CD8-positive, alpha-beta memory T cell (primary cell): ENCODE measurements at regions of chrX and their contacts with region 1.

Region 1: GRCh38 chrX:45801554-45801953 is 600.9 kb upstream of the DIPK2B start:
- DNase-seq: peak in 2 of 5 donors; percentile 20 to 28
- H3K4me3 ChIP-seq: no peak overlapping the region
- H3K4me3 Mint-ChIP-seq: peak overlapping the region in 6 of 7 donors; percentile 50 to 71 (median 63)
- H3K27ac ChIP-seq: peak overlapping the region; percentile 24
- H3K27ac Mint-ChIP-seq: peak overlapping the region in 5 of 8 donors; percentile 50 to 83 (median 72)
- H3K4me1 ChIP-seq: peaks cover 4% of the 10 kb centered on the region
- H3K4me1 Mint-ChIP-seq: peaks cover 16 to 79% (median 69%) of the 10 kb centered on the region in 3 donors
- H3K27me3 ChIP-seq: no peaks in the 10 kb centered on the region
- H3K27me3 Mint-ChIP-seq: peaks cover 0 to 5% of the 10 kb centered on the region in 2 donors

Region 2: DNA sequence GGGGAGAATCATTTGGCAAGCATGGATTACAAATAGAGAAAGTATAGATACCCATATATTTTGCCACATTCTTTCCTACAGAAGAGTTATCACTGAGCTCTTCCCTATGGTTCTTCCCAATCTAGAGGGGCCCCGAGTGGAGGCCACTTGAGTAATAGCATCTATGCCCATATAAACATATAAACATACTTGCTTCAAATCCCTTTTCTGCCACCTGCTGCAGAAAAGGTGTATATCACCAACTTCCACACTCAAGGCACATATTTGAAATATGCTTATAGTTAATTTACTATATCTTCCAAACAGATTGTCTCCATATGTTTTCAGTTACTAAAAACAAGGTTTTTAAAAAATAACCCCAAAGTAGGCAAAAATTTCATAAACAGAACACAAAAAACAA is 42.0 kb after region 1 on chrX:
- CTCF ChIA-PET with region 1: interaction called, 28 read pairs
- POLR2A ChIA-PET with region 1: no interaction called
- DNase-seq: peak in 1 of 5 donors; percentile 13
- H3K4me3 ChIP-seq: no peak overlapping the region
- H3K4me3 Mint-ChIP-seq: peak overlapping the region in 1 of 7 donors; percentile 27
- H3K27ac ChIP-seq: no peak overlapping the region
- H3K27ac Mint-ChIP-seq: peak overlapping the region in 1 of 8 donors; percentile 2
- H3K4me1 ChIP-seq: no peaks in the 10 kb centered on the region
- H3K4me1 Mint-ChIP-seq: peaks cover 5 to 38% (median 25%) of the 10 kb centered on the region in 3 donors
- H3K27me3 ChIP-seq: no peaks in the 10 kb centered on the region
- H3K27me3 Mint-ChIP-seq: peaks cover 0 to 7% of the 10 kb centered on the region in 2 donors

Region 3: GRCh38 chrX:45849253-45849862 is 47.8 kb after region 1 on chrX:
- CTCF ChIA-PET with region 1: interaction called, 28 read pairs
- POLR2A ChIA-PET with region 1: interaction called, 4 read pairs
- DNase-seq: peak in 3 of 5 donors; percentile 16 to 45 (median 19)
- H3K4me3 ChIP-seq: peak overlapping the region; percentile 65
- H3K4me3 Mint-ChIP-seq: peak overlapping the region; percentile 93 to 96 (median 95)
- H3K27ac ChIP-seq: no peak overlapping the region
- H3K27ac Mint-ChIP-seq: peak overlapping the region in 5 of 8 donors; percentile 2 to 92 (median 63)
- H3K4me1 ChIP-seq: no peaks in the 10 kb centered on the region
- H3K4me1 Mint-ChIP-seq: peaks cover 18 to 21% (median 18%) of the 10 kb centered on the region in 3 donors
- H3K27me3 ChIP-seq: no peaks in the 10 kb centered on the region
- H3K27me3 Mint-ChIP-seq: peaks cover 0 to 3% of the 10 kb centered on the region in 2 donors